BJ (cell line): ENCODE measurements at regions of chr1 and their contacts with region 1.

Region 1: DNA sequence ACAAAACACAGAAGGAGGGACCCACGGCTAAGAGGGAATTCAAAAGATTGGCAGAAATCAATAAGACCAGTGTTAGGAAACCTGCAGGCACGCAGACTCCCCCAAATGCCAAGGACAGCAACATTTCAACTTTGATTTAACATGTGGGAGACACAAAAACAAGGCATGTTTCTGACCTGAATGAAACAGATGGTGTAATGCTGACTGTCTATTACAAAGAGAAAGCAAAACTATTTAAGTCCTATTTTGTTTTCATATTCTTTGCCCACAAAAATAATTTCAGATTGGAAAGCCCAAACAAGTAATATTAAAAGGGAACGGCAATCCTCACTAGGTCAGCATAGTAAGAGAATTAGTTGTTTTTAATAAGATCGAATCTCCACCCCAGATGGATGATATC is 107.9 kb downstream of the S1PR1 start:
- DNase-seq: no peak
- H3K4me3 ChIP-seq: no peak overlapping the region
- H3K27me3 ChIP-seq: peaks cover 6% of the 10 kb centered on the region
- CTCF ChIP-seq: no peak

Region 2: DNA sequence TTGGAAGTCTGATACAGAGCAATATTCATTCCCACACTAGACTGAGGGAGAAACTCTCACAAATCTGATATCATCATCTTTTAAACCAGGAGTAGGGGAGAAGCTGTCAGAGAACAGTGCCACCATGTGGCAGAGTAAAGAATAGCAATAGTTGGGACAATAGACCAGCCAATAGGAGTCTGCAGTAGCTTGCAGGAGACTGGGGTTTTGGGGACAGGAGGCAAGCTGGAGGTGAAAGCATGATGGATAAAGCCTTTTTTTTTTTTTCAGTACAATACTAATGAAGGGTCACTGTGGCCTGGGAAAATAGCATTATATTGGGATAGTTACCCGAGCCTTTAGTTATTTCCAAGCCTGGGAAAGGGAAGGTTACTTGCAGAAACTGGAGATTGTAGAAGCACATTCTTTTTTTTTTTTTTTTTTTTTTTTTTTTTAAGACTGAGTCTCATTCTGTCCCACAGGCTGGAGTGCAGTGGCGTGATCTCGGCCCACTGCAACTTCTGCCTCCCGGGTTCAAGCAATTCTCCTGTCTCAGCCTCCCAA is 12.8 kb after region 1 on chr1:
- CTCF ChIA-PET with region 1: interaction called, 22 read pairs
- POLR2A ChIA-PET with region 1: no interaction called
- DNase-seq: peak; percentile 19
- H3K4me3 ChIP-seq: no peak overlapping the region
- H3K27me3 ChIP-seq: peaks cover 1% of the 10 kb centered on the region
- CTCF ChIP-seq: peak; percentile 86